Naive thymus-derived CD4-positive, alpha-beta T cell (primary cell): ENCODE measurements at regions of chr1 and their contacts with region 1.

Region 1: GRCh38 chr1:110766025-110766647 is 91.4 kb upstream of the KCNA3 start:
- DNase-seq: peak in 7 of 9 donors; percentile 27 to 74 (median 61)
- ATAC-seq: peak; percentile 85
- H3K4me3 ChIP-seq: no peak overlapping the region
- H3K4me3 Mint-ChIP-seq: peak overlapping the region in 1 of 10 donors; percentile 21
- H3K27ac ChIP-seq: no peak overlapping the region
- H3K27ac Mint-ChIP-seq: no peak overlapping the region
- H3K4me1 ChIP-seq: no peaks in the 10 kb centered on the region
- H3K4me1 Mint-ChIP-seq: peaks cover 0 to 12% (median 5%) of the 10 kb centered on the region in 7 donors
- H3K27me3 ChIP-seq: no peaks in the 10 kb centered on the region
- H3K27me3 Mint-ChIP-seq: peaks cover 0 to 52% (median 8%) of the 10 kb centered on the region in 5 donors

Region 2: DNA sequence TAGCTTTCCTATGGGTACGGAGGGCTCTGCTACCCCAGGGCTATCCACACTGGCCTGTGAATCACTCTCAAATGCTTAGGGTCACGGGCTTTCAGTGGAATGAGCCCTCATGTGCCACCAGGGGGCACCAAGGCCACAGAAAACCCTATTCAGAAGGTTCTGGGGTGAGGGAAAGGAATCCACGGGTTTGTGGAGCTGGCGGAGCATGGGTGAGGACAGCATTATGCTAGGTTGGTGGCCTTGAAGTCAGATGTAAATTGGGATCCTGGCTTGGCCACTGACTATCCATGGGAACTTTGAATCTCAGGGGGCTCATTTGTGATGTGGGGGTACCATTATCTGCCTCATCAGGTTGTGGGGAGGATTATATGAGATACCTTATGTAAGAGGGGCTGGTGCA is 353.6 kb before region 1 on chr1:
- CTCF ChIA-PET with region 1: no interaction called
- POLR2A ChIA-PET with region 1: no interaction called
- intact Hi-C with region 1: loop called in 1 of 2 experiments (anchors 5 kb)
- DNase-seq: peak; percentile 22 to 59 (median 51)
- ATAC-seq: peak; percentile 71
- H3K4me3 ChIP-seq: no peak overlapping the region
- H3K4me3 Mint-ChIP-seq: no peak overlapping the region
- H3K27ac ChIP-seq: no peak overlapping the region
- H3K27ac Mint-ChIP-seq: peak overlapping the region in 2 of 9 donors; percentile 15 to 77
- H3K4me1 ChIP-seq: peaks cover 7 to 13% of the 10 kb centered on the region in 2 donors
- H3K4me1 Mint-ChIP-seq: peaks cover 9 to 22% (median 18%) of the 10 kb centered on the region in 7 donors
- H3K27me3 ChIP-seq: no peaks in the 10 kb centered on the region
- H3K27me3 Mint-ChIP-seq: no peaks in the 10 kb centered on the region

Region 3: GRCh38 chr1:110554871-110555801 is 211.0 kb before region 1 on chr1:
- CTCF ChIA-PET with region 1: interaction called, 11 read pairs
- POLR2A ChIA-PET with region 1: no interaction called
- intact Hi-C with region 1: loop called (anchors 1 kb)
- DNase-seq: peak; percentile 20 to 71 (median 54)
- ATAC-seq: peak; percentile 89
- H3K4me3 ChIP-seq: peak overlapping the region; percentile 25
- H3K4me3 Mint-ChIP-seq: peak overlapping the region in 9 of 10 donors; percentile 13 to 63 (median 31)
- H3K27ac ChIP-seq: no peak overlapping the region
- H3K27ac Mint-ChIP-seq: no peak overlapping the region
- H3K4me1 ChIP-seq: no peaks in the 10 kb centered on the region
- H3K4me1 Mint-ChIP-seq: peaks cover 0 to 8% (median 0%) of the 10 kb centered on the region in 7 donors
- H3K27me3 ChIP-seq: peaks cover 0 to 9% of the 10 kb centered on the region in 2 donors
- H3K27me3 Mint-ChIP-seq: peaks cover 47 to 72% (median 60%) of the 10 kb centered on the region in 5 donors

Region 4: GRCh38 chr1:110639724-110640386 is 126.3 kb before region 1 on chr1:
- CTCF ChIA-PET with region 1: interaction called, 23 read pairs
- POLR2A ChIA-PET with region 1: interaction called, 5 read pairs
- intact Hi-C with region 1: no loop called
- DNase-seq: no peak
- ATAC-seq: peak; percentile 65
- H3K4me3 ChIP-seq: no peak overlapping the region
- H3K4me3 Mint-ChIP-seq: peak overlapping the region in 8 of 10 donors; percentile 1 to 46 (median 8)
- H3K27ac ChIP-seq: peak overlapping the region; percentile 13
- H3K27ac Mint-ChIP-seq: peak overlapping the region in 7 of 9 donors; percentile 56 to 92 (median 86)
- H3K4me1 ChIP-seq: peaks cover 81 to 98% of the 10 kb centered on the region in 2 donors
- H3K4me1 Mint-ChIP-seq: peaks cover 64 to 97% (median 85%) of the 10 kb centered on the region in 7 donors
- H3K27me3 ChIP-seq: no peaks in the 10 kb centered on the region
- H3K27me3 Mint-ChIP-seq: no peaks in the 10 kb centered on the region

Region 5: DNA sequence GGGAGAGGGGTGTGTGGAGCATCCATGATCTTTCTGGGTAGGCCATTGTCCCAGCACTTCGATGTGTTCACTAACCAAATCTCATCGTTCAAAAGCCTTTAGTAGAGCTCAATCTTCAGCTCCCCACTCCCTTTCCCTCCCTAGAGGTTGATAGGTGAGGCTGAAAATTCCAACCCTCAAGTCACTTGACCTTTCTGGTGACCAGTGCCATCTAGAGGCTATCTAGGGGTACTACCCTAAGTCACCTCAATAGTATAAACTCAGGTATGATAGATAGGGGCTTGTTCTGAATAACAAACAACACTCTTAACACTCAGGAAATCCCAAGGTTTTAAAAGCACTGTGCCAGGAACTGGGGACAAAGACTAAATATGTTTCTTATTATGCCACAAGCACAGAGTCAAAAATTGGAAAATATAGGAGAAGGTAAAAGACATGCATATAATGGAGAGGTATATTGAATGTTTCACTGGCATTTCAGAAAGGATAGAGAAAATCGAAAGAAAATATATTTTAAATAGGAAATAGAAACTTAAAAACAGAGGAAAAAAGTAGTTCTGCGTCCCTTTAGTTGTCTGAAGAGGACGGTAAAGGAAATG is 63.9 kb after region 1 on chr1:
- CTCF ChIA-PET with region 1: no interaction called
- POLR2A ChIA-PET with region 1: no interaction called
- intact Hi-C with region 1: loop called in 1 of 2 experiments (anchors 1 kb)
- DNase-seq: peak in 7 of 9 donors; percentile 20 to 61 (median 54)
- ATAC-seq: peak; percentile 93
- H3K4me3 ChIP-seq: no peak overlapping the region
- H3K4me3 Mint-ChIP-seq: no peak overlapping the region
- H3K27ac ChIP-seq: no peak overlapping the region
- H3K27ac Mint-ChIP-seq: peak overlapping the region in 1 of 9 donors; percentile 14
- H3K4me1 ChIP-seq: no peaks in the 10 kb centered on the region
- H3K4me1 Mint-ChIP-seq: peaks cover 6 to 33% (median 13%) of the 10 kb centered on the region in 7 donors
- H3K27me3 ChIP-seq: no peaks in the 10 kb centered on the region
- H3K27me3 Mint-ChIP-seq: peaks cover 0 to 49% (median 2%) of the 10 kb centered on the region in 5 donors

Region 6: GRCh38 chr1:110986407-110986891 is 220.3 kb after region 1 on chr1:
- CTCF ChIA-PET with region 1: interaction called, 5 read pairs
- POLR2A ChIA-PET with region 1: no interaction called
- intact Hi-C with region 1: loop called in 1 of 2 experiments (anchors 5 kb)
- DNase-seq: no peak
- ATAC-seq: no peak
- H3K4me3 ChIP-seq: no peak overlapping the region
- H3K4me3 Mint-ChIP-seq: no peak overlapping the region
- H3K27ac ChIP-seq: no peak overlapping the region
- H3K27ac Mint-ChIP-seq: no peak overlapping the region
- H3K4me1 ChIP-seq: peaks cover 0 to 17% of the 10 kb centered on the region in 2 donors
- H3K4me1 Mint-ChIP-seq: peaks cover 0 to 10% (median 7%) of the 10 kb centered on the region in 7 donors
- H3K27me3 ChIP-seq: no peaks in the 10 kb centered on the region
- H3K27me3 Mint-ChIP-seq: peaks cover 0 to 29% (median 9%) of the 10 kb centered on the region in 5 donors